Activated CD4-positive, alpha-beta T cell treated with anti-CD3 and anti-CD28 coated beads, Interleukin-2, amount 10 ng/mL, durations not matched to agents 24 days and 14 days (primary cell): ENCODE measurements at regions of chr3 and their contacts with region 1.

Region 1: DNA sequence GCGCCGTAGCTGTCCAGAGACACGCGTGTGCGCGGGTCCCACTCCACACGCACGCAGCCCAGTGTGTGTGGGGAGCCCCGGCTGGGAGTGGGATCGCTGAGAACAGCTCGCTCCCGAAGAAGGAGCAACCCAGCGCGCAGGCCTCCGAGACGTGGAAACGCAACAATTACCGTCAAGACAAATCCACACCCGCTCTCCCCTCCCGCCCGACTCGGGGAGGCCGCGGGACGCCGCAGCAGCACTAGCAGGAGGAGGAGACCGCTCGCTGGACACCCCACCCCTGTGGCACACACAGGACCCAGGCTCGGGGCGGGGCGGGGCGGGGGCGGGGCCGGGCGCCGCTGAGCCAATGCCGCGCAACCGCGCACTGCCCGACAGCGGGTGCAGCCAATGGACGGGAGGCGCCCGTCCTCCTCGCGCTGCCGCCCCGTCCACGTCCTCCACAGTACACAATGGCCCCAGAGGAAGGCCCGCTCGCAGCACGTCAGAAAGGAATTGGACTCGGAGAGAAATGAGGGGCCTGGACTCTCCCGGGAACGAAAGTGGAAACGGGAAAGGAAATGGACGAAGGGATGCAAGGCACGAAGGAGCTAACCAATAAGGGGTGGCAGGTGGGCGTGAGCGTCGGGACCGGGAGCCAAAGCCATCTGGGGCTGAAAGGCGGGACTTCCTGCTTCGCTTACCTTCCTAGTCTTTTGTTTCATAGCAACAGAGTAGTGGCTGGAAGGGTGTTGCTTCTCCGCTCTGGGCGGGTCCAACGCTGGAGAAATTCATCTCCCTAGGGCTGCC is at the start of gene CBLB:
- DNase-seq: peak; percentile 95
- H3K4me3 Mint-ChIP-seq: peak within 1 kb of the TSS; percentile 93
- H3K27ac Mint-ChIP-seq: peak within 1 kb of the TSS; percentile 98
- H3K4me1 Mint-ChIP-seq: peaks cover 31% of the 10 kb centered on the region
- H3K27me3 Mint-ChIP-seq: no peaks in the 10 kb centered on the region
- total RNA-seq, gene CBLB: 177 and 183 TPM in 2 replicates

Region 2: GRCh38 chr3:105686278-105686897 is 182.5 kb before region 1 on chr3:
- intact Hi-C with region 1: loop called (anchors 2 kb)
- DNase-seq: peak; percentile 53
- H3K4me3 Mint-ChIP-seq: no peak overlapping the region
- H3K27ac Mint-ChIP-seq: peak overlapping the region; percentile 67
- H3K4me1 Mint-ChIP-seq: peaks cover 18% of the 10 kb centered on the region
- H3K27me3 Mint-ChIP-seq: no peaks in the 10 kb centered on the region

Region 3: GRCh38 chr3:105715372-105715771 is 153.6 kb before region 1 on chr3:
- intact Hi-C with region 1: no loop called
- DNase-seq: no peak
- H3K4me3 Mint-ChIP-seq: no peak overlapping the region
- H3K27ac Mint-ChIP-seq: no peak overlapping the region
- H3K4me1 Mint-ChIP-seq: peaks cover 15% of the 10 kb centered on the region
- H3K27me3 Mint-ChIP-seq: no peaks in the 10 kb centered on the region

Region 4: DNA sequence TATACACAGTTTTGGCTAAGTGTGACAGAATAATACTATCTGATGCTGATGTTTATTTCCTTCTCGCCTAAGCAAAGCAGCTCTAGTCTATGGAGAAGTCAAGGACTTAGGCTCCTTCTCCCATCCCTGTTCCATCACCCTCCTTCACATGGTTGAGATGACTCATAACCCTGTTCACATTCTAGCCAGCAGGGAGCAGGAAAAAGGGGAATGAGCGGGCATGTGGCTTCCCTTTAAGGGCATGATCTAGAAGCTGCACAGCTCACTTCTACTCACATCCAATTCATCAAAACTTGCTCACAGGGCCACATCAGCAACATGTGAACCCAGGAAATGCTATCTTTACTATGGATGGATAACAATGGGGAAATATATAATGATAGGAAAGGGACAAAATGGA is 41.0 kb before region 1 on chr3:
- intact Hi-C with region 1: loop called (anchors 1 kb)
- DNase-seq: peak; percentile 68
- H3K4me3 Mint-ChIP-seq: peak overlapping the region; percentile 60
- H3K27ac Mint-ChIP-seq: peak overlapping the region; percentile 100
- H3K4me1 Mint-ChIP-seq: peaks cover 73% of the 10 kb centered on the region
- H3K27me3 Mint-ChIP-seq: no peaks in the 10 kb centered on the region

Region 5: DNA sequence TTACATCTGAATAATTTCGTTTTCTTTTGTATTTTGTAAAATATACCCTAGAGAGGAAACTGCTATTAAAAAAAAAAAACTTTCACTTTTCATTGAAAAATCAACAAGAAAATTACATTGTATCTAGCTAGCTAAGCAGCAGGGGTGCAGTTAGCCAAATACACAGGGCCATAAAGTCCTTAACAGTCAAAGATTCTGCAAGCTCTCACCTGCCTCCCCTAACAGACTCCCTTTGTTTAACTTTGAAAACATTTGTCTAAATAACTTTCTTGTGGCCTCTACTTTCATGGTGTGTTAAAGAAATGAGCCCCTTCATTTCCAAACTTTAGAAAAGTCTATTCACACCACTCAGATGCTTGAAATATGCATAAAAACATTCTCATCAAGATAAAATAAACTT is 23.4 kb before region 1 on chr3:
- intact Hi-C with region 1: loop called (anchors 1 kb)
- DNase-seq: no peak
- H3K4me3 Mint-ChIP-seq: no peak overlapping the region
- H3K27ac Mint-ChIP-seq: no peak overlapping the region
- H3K4me1 Mint-ChIP-seq: peaks cover 47% of the 10 kb centered on the region
- H3K27me3 Mint-ChIP-seq: no peaks in the 10 kb centered on the region

Region 6: DNA sequence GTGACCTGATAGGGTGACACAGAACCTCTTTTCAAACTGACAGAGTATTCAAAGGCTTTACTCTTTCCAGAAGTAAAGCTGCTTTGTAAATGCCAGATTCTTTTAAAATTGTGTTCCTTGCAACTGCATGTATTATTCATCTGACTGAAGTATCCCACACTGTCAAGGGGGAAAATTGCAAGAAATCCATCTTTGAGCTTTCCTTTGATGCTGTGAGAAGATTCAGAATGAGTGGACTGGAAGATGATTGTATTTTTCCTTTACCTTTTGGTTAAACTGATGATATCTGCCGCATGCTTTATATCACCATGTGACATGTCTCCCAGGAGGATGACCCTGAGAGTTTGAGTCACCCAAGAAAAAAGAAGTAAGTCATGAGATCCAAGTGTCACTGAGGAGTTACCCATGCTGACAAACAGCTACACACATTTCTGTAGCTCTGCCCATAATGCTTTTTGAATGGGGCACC is 250.7 kb after region 1 on chr3:
- intact Hi-C with region 1: loop called (anchors 2 kb)
- DNase-seq: no peak
- H3K4me3 Mint-ChIP-seq: peak overlapping the region; percentile 46
- H3K27ac Mint-ChIP-seq: peak overlapping the region; percentile 87
- H3K4me1 Mint-ChIP-seq: peaks cover 28% of the 10 kb centered on the region
- H3K27me3 Mint-ChIP-seq: no peaks in the 10 kb centered on the region

Region 7: GRCh38 chr3:106232956-106233355 is 364.0 kb after region 1 on chr3:
- intact Hi-C with region 1: loop called (anchors 5 kb)
- DNase-seq: no peak
- H3K4me3 Mint-ChIP-seq: no peak overlapping the region
- H3K27ac Mint-ChIP-seq: no peak overlapping the region
- H3K4me1 Mint-ChIP-seq: peaks cover 42% of the 10 kb centered on the region
- H3K27me3 Mint-ChIP-seq: no peaks in the 10 kb centered on the region

Region 8: DNA sequence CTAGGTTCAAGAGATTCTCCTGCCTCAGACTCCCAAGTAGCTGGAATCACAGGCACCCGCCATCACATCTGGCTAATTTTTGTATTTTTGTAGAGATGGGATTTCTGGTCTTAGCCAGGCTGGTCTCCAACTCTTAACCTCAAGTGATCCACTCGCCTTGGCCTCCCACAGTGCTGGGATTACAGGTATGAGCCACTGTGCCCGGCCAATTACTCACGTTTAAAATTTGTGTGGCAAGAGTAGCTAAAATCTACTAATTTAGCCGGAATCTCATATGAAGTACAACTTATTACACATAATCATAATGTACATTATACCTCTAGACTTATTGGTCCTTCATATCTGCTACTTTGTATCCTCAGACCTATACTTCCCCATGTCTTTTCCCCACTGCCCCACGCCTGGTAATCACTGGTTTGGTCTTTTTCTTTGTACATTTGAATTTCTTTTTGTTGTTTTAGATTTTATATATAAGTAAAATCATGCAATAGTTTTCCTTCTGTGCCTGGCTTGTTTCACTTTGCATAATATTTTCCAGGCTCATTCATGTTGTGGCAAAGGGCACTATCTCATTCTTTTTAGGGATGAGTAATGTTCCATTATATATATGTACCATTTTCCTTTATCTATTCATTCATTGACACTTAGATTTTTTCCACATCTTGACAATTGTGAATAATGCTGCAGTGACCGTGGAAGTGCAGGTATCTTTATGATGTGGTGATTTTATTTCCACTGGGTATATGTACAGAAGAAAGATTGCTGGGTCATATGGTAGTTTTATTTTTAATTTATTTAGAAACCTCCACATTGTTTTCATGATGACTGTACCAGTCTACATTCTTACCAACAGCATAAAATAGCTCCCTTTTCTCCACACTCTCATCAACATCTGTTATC is 604.9 kb after region 1 on chr3:
- intact Hi-C with region 1: loop called (anchors 5 kb)
- DNase-seq: no peak
- H3K4me3 Mint-ChIP-seq: no peak overlapping the region
- H3K27ac Mint-ChIP-seq: peak overlapping the region; percentile 83
- H3K4me1 Mint-ChIP-seq: peaks cover 8% of the 10 kb centered on the region
- H3K27me3 Mint-ChIP-seq: no peaks in the 10 kb centered on the region